Heart right ventricle (tissue), 16 donors: ENCODE measurements at regions of chr11 and their contacts with region 1.

Region 1: DNA sequence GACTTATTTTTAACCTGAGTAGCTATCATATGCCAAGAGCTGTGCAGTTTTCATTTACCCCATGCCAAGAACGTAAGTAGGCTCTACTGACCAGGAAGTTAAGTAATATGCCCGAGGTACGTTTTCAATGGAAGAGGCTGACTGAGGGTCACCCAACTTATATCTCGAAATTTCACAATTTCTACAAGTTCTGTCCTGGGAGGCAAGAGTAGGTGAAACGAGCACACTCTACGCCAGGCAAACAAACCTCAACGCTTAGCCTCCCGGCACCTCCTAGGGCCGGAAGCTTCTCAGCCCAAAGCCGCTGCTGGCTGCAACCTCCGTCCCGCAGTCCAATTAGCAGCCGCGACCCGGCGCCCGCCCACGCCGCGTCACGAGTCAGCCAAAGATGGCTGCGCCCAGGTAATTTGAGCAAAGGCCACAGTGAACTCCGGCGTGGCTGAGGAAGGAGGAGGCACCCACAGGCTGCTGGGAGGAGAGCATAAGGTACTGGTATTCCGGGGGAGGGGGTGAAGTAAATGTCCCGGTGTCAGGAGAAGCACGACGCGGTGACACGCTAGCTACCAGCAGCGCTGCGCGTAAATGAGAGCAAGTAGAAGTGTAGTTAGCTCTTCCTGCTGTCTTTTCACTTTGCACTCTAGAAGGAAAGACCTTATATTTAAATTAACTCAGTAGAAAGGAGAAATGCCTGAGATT is at the start of gene TMEM126A:
- DNase-seq: peak; percentile 88 to 89
- ATAC-seq: peak; percentile 97 to 100 (median 99)
- H3K4me3 ChIP-seq: peak within 1 kb of the TSS; percentile 53 to 79 (median 68)
- H3K27ac ChIP-seq: peak within 1 kb of the TSS in 9 of 10 donors; percentile 57 to 89 (median 83)
- H3K4me1 ChIP-seq: peaks cover 0 to 39% (median 22%) of the 10 kb centered on the region in 9 donors
- H3K27me3 ChIP-seq: peaks cover 0 to 18% (median 0%) of the 10 kb centered on the region in 7 donors
- CTCF ChIP-seq: no peak
- total RNA-seq, gene TMEM126A: 56.9 to 79.3 (median 67.3) TPM

Region 2: DNA sequence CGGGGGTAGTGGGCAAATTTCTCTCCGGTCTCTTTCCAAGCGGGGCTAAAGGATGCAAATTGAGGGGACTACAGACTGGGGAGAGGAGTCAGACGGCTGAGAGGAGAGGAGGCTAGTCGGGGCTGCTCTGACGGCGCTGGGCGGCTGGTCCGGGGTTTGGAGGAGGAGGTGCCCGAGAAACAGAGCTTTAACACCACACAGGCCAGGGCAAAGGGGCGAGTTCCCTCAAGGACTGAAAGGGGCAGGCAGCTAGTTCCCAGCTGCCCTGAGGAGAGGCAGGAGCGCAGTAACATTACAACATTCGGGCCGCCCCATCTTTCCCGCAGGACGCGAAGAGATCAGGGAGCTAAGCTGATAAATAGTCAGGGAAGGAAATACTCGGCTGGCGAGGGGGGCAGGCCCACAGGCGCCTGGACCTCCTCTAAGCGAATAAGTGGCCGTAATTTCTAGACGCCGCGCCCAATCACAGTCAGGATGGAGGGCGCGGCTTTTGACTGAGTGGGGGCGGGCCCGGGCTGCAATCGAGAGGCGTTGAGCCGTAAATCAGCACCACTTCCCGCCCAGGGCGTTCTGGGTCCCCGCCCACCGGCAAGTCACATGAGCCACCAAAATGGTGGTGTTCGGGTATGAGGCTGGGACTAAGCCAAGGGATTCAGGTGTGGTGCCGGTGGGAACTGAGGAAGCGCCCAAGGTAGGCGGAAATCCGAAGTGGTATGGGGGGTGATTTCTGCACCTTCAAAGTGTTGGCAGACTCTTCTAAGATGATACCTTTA is 19.6 kb before region 1 on chr11 and contains the start of gene TMEM126B:
- intact Hi-C with region 1: loop called in 1 of 10 experiments (anchors 2 kb)
- DNase-seq: peak; percentile 97 to 98
- ATAC-seq: peak; percentile 99 to 100 (median 100)
- H3K4me3 ChIP-seq: peak within 1 kb of the TSS; percentile 59 to 84 (median 78)
- H3K27ac ChIP-seq: peak within 1 kb of the TSS; percentile 77 to 96 (median 92)
- H3K4me1 ChIP-seq: peaks cover 0 to 45% (median 26%) of the 10 kb centered on the region in 9 donors
- H3K27me3 ChIP-seq: no peaks in the 10 kb centered on the region
- CTCF ChIP-seq: peak in 1 of 9 donors; percentile 3
- total RNA-seq, gene TMEM126B: 44.3 to 63.2 (median 51.6) TPM